GM12878 (cell line): ENCODE measurements at regions of chr3 and their contacts with region 1.

Region 1: GRCh38 chr3:72818092-72818773 is 30.0 kb downstream of the SHQ1 start:
- DNase-seq: no peak
- ATAC-seq: no peak
- H3K4me3 ChIP-seq: no peak overlapping the region
- H3K27ac ChIP-seq: 0 out of 2 replicates have a peak overlapping the region, but pooled peaks have one; percentile 13
- H3K4me1 ChIP-seq: peaks cover 47% of the 10 kb centered on the region
- H3K27me3 ChIP-seq: no peaks in the 10 kb centered on the region
- CTCF ChIP-seq: peak; percentile 43 to 74 (median 53)
- EP300 ChIP-seq: no peak
- POLR2A ChIP-seq: no peak
- RAD21 ChIP-seq: peak; percentile 77

Region 2: DNA sequence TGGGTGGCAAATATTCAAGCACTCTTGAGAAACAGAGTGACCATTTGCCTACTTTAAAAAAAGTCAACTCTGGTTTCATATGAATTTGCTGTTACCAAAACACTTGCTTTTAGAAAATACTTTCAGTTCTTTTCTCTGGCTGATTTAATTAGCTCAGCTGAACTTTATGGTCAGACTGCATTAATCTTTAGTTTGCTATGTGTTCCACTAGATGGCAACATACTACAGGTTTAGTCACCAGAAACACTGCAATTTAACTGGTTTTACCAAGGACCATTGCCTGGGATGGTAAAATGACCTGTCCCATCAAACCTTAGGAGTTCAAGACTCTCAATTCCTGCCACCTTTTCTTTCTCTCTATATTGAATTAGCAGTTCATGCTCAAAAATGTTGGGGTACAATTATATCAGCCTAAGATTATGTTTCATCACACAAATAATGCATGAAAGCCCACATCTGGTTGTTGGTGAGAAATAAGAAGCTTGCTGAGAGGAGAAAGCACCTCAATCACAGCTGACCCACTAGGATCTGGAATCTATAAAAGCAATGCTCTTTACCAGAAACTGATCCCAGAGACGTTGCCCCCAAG is 1107.2 kb before region 1 on chr3:
- CTCF ChIA-PET with region 1: interaction called, 3 read pairs
- POLR2A ChIA-PET with region 1: no interaction called
- RAD21 ChIA-PET with region 1: interaction called, 3 read pairs
- SMC1A ChIA-PET with region 1: no interaction called
- in situ Hi-C with region 1: no loop called
- intact Hi-C with region 1: loop called (anchors 2 kb)
- DNase-seq: peak; percentile 21
- ATAC-seq: peak; percentile 89
- H3K4me3 ChIP-seq: no peak overlapping the region
- H3K27ac ChIP-seq: no peak overlapping the region
- H3K4me1 ChIP-seq: no peaks in the 10 kb centered on the region
- H3K27me3 ChIP-seq: 0 out of 4 replicates have a peak, but pooled peaks cover 0 to 3% of the 10 kb centered on the region in 2 experiments
- CTCF ChIP-seq: peak; percentile 49 to 74 (median 62); a peak in 5 of 6 replicates
- EP300 ChIP-seq: no peak
- POLR2A ChIP-seq: no peak
- RAD21 ChIP-seq: peak; percentile 84

Region 3: DNA sequence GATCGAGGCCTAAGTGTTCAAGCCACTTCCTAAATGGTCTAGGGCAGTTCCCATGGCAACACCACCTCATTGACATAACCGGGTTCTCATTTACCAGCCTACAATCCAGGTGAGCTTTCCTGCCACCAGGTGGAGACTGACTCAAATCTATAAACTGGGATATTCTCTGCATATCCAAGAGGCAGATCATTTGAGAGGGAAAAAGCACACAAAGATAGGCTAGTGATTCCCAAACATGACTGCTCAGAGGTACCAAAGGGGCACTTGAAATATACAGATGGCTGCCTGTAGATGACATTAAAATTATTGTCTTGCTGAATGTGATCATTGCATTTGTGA is 892.0 kb before region 1 on chr3:
- CTCF ChIA-PET with region 1: interaction called, 5 read pairs
- POLR2A ChIA-PET with region 1: no interaction called
- RAD21 ChIA-PET with region 1: interaction called, 11 read pairs
- SMC1A ChIA-PET with region 1: interaction called, 8 read pairs
- in situ Hi-C with region 1: no loop called
- intact Hi-C with region 1: loop called (anchors 2 kb)
- DNase-seq: no peak
- ATAC-seq: peak; percentile 71
- H3K4me3 ChIP-seq: no peak overlapping the region
- H3K27ac ChIP-seq: no peak overlapping the region
- H3K4me1 ChIP-seq: peaks cover 4% of the 10 kb centered on the region; the same call in 1 of the 2 replicates
- H3K27me3 ChIP-seq: no peaks in the 10 kb centered on the region
- CTCF ChIP-seq: peak; percentile 36 to 53 (median 51); a peak in 5 of 6 replicates
- EP300 ChIP-seq: no peak
- POLR2A ChIP-seq: no peak
- RAD21 ChIP-seq: peak; percentile 72

Region 4: GRCh38 chr3:72100601-72101187 is 717.5 kb before region 1 on chr3:
- CTCF ChIA-PET with region 1: interaction called, 3 read pairs
- POLR2A ChIA-PET with region 1: no interaction called
- RAD21 ChIA-PET with region 1: no interaction called
- SMC1A ChIA-PET with region 1: interaction called, 3 read pairs
- in situ Hi-C with region 1: no loop called
- intact Hi-C with region 1: loop called (anchors 5 kb)
- DNase-seq: peak; percentile 77
- ATAC-seq: peak; percentile 74
- H3K4me3 ChIP-seq: peak overlapping the region; percentile 69; the same call in 1 of the 2 replicates
- H3K27ac ChIP-seq: peak overlapping the region; percentile 68
- H3K4me1 ChIP-seq: peaks cover 49% of the 10 kb centered on the region
- H3K27me3 ChIP-seq: no peaks in the 10 kb centered on the region
- CTCF ChIP-seq: no peak
- EP300 ChIP-seq: peak; percentile 49 to 76
- POLR2A ChIP-seq: peak; percentile 59
- RAD21 ChIP-seq: 0 out of 2 replicates have a peak, but pooled peaks have one; percentile 5

Region 5: DNA sequence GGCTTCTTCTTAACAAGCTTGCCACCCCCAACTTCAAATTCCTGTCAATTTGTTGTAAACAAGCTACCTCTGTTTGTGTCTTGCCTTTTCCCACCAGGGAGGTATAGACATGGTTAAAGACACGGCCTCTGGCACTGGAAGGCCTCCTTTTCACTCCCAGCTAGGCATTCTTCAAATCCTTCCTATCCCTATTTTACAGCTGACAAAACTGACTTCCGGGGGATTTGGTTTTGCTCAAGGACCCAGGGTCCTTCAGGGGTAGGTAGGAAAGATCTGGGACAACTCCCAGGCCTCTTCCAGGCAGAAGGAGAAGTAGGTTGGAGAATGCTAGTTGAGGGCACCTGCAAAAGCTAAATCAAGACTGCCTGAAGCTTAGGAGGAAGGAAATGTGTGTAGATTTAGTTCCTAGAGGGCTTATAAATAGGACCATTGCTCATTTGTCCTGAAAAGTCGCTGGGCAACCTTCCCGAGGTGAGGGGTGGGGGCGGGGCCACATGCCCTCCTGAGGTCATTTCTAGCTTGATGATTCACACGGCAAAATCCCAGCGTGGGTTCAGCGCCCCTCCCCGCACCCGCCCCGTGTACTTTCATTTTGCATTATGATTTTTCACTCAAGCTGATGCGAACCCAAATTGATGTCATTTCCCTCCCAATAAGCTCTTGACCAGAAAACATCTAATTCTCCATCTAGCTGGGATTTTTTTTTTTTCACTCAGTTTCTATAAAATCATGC is 335.5 kb before region 1 on chr3:
- CTCF ChIA-PET with region 1: interaction called, 5 read pairs
- POLR2A ChIA-PET with region 1: no interaction called
- RAD21 ChIA-PET with region 1: interaction called, 3 read pairs
- SMC1A ChIA-PET with region 1: no interaction called
- in situ Hi-C with region 1: no loop called
- intact Hi-C with region 1: loop called (anchors 5 kb)
- DNase-seq: peak; percentile 48
- ATAC-seq: peak; percentile 75
- H3K4me3 ChIP-seq: 0 out of 2 replicates have a peak overlapping the region, but pooled peaks have one; percentile 2
- H3K27ac ChIP-seq: peak overlapping the region; percentile 60
- H3K4me1 ChIP-seq: peaks cover 20% of the 10 kb centered on the region
- H3K27me3 ChIP-seq: no peaks in the 10 kb centered on the region
- CTCF ChIP-seq: no peak
- EP300 ChIP-seq: peak in 1 of 2 experiments; percentile 52; a peak in 1 of 4 replicates
- POLR2A ChIP-seq: no peak
- RAD21 ChIP-seq: no peak

Region 6: DNA sequence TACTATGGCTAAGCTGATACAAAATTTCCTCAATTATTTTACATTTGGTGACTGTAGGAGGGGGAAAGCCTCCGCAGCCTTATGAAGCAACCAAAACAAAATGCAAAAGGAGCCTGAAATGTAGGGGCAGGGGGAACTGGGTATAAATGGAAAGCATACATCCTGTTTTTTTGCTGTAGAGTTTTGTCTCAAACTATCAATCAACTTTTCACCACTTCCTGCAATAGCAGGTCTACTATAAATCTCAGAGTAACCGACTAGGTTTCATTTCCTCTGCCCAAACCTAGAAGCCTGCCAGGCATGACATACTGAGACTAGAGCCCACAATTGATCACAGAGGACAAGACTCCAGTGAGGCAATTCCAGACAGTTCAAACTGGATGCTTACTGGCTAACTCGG is 61.3 kb before region 1 on chr3:
- CTCF ChIA-PET with region 1: interaction called, 4 read pairs
- POLR2A ChIA-PET with region 1: no interaction called
- RAD21 ChIA-PET with region 1: interaction called, 8 read pairs
- SMC1A ChIA-PET with region 1: interaction called, 6 read pairs
- in situ Hi-C with region 1: no loop called
- intact Hi-C with region 1: loop called (anchors 5 kb)
- DNase-seq: peak; percentile 77
- ATAC-seq: peak; percentile 100
- H3K4me3 ChIP-seq: no peak overlapping the region
- H3K27ac ChIP-seq: peak overlapping the region; percentile 29; the same call in 1 of the 2 replicates
- H3K4me1 ChIP-seq: peaks cover 14% of the 10 kb centered on the region
- H3K27me3 ChIP-seq: no peaks in the 10 kb centered on the region
- CTCF ChIP-seq: no peak
- EP300 ChIP-seq: peak; percentile 67 to 81
- POLR2A ChIP-seq: no peak
- RAD21 ChIP-seq: no peak

Region 7: GRCh38 chr3:72924055-72924454 is 105.8 kb after region 1 on chr3:
- CTCF ChIA-PET with region 1: no interaction called
- POLR2A ChIA-PET with region 1: no interaction called
- RAD21 ChIA-PET with region 1: no interaction called
- SMC1A ChIA-PET with region 1: no interaction called
- in situ Hi-C with region 1: no loop called
- intact Hi-C with region 1: no loop called
- DNase-seq: no peak
- ATAC-seq: peak; percentile 63
- H3K4me3 ChIP-seq: no peak overlapping the region
- H3K27ac ChIP-seq: no peak overlapping the region
- H3K4me1 ChIP-seq: no peaks in the 10 kb centered on the region
- H3K27me3 ChIP-seq: no peaks in the 10 kb centered on the region
- CTCF ChIP-seq: 0 out of 6 replicates have a peak, but pooled peaks of 1 of the 3 experiments have one; percentile 14
- EP300 ChIP-seq: no peak
- POLR2A ChIP-seq: no peak
- RAD21 ChIP-seq: no peak

Region 8: DNA sequence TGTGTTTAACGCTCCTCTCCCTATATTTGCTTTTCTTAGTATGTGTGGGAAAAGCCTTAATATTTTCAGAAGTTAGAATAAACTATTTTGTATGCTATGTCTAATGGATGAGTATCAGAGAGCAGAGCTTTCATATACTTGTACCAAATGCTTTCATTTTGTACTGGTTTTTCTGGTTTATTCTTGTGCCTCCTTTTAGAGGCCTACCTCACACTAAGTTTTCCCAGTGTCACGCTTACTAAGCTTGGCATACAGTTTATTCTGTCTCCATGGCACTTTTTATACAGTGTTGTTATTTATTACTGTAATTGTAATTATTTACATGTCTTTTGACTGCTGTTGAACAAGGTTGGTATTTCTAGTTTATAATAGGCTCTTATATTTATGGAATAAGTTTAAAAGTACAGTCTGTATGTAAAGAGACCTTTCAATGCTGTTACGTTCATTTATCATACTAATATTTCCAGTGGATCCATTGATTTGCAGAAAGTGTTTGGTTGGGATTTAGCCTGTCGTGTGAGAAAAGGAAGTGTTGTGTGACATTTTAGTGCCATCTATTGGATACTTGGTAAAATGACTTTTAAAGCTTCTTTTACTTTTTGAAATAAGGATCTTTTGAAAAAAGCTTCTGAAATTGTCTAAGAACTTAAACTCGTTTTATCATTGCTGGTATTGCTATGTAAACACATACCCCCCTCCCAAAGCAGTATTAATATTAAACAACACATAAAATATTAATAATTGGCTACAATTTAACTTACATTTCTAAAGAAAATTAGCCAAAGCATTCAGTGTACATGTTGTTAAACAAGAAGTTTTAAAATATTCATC is 238.0 kb after region 1 on chr3:
- CTCF ChIA-PET with region 1: interaction called, 16 read pairs
- POLR2A ChIA-PET with region 1: no interaction called
- RAD21 ChIA-PET with region 1: interaction called, 3 read pairs
- SMC1A ChIA-PET with region 1: interaction called, 5 read pairs
- in situ Hi-C with region 1: no loop called
- intact Hi-C with region 1: no loop called
- DNase-seq: no peak
- ATAC-seq: peak; percentile 49
- H3K4me3 ChIP-seq: no peak overlapping the region
- H3K27ac ChIP-seq: no peak overlapping the region
- H3K4me1 ChIP-seq: no peaks in the 10 kb centered on the region
- H3K27me3 ChIP-seq: no peaks in the 10 kb centered on the region
- CTCF ChIP-seq: peak; percentile 34 to 57 (median 35); a peak in 3 of 6 replicates
- EP300 ChIP-seq: no peak
- POLR2A ChIP-seq: no peak
- RAD21 ChIP-seq: peak; percentile 75